A549 (cell line): ENCODE measurements at regions of chr10 and their contacts with region 1.

Region 1: GRCh38 chr10:12710594-12711349 is 290.7 kb downstream of the CCDC3 start:
- DNase-seq: peak; percentile 70 to 84
- ATAC-seq: peak; percentile 57 to 67; a peak in 5 of 6 replicates
- H3K4me3 ChIP-seq: no peak overlapping the region
- H3K27ac ChIP-seq: peak overlapping the region; percentile 82 to 94
- H3K4me1 ChIP-seq: peaks cover 55% of the 10 kb centered on the region
- CTCF ChIP-seq: peak; percentile 92
- EP300 ChIP-seq: no peak; a peak in 1 of 5 replicates
- POLR2A ChIP-seq: no peak
- RAD21 ChIP-seq: peak; percentile 96

Region 2: GRCh38 chr10:12214763-12215218 is 496.0 kb before region 1 on chr10:
- CTCF ChIA-PET with region 1: interaction called, 17 read pairs
- POLR2A ChIA-PET with region 1: interaction called, 4 read pairs
- DNase-seq: peak; percentile 40 to 50
- ATAC-seq: peak in 1 of 2 experiments; percentile 47; a peak in 3 of 6 replicates
- H3K4me3 ChIP-seq: no peak overlapping the region
- H3K27ac ChIP-seq: peak overlapping the region in 1 of 2 experiments; percentile 39; a peak in 2 of 6 replicates
- H3K4me1 ChIP-seq: peaks cover 4% of the 10 kb centered on the region; the same call in 2 of the 3 replicates
- CTCF ChIP-seq: peak; percentile 83
- EP300 ChIP-seq: no peak
- POLR2A ChIP-seq: no peak
- RAD21 ChIP-seq: peak; percentile 56 to 65

Region 3: GRCh38 chr10:12400266-12400931 is 310.4 kb before region 1 on chr10:
- CTCF ChIA-PET with region 1: interaction called, 12 read pairs
- POLR2A ChIA-PET with region 1: interaction called, 3 read pairs
- DNase-seq: peak in 1 of 2 experiments; percentile 66
- ATAC-seq: peak; percentile 75 to 78; a peak in 5 of 6 replicates
- H3K4me3 ChIP-seq: no peak overlapping the region
- H3K27ac ChIP-seq: peak overlapping the region; percentile 45 to 78; a peak in 4 of 6 replicates
- H3K4me1 ChIP-seq: peaks cover 26% of the 10 kb centered on the region
- CTCF ChIP-seq: no peak
- EP300 ChIP-seq: peak in 1 of 2 experiments; percentile 46; a peak in 1 of 5 replicates
- POLR2A ChIP-seq: no peak
- RAD21 ChIP-seq: no peak

Region 4: DNA sequence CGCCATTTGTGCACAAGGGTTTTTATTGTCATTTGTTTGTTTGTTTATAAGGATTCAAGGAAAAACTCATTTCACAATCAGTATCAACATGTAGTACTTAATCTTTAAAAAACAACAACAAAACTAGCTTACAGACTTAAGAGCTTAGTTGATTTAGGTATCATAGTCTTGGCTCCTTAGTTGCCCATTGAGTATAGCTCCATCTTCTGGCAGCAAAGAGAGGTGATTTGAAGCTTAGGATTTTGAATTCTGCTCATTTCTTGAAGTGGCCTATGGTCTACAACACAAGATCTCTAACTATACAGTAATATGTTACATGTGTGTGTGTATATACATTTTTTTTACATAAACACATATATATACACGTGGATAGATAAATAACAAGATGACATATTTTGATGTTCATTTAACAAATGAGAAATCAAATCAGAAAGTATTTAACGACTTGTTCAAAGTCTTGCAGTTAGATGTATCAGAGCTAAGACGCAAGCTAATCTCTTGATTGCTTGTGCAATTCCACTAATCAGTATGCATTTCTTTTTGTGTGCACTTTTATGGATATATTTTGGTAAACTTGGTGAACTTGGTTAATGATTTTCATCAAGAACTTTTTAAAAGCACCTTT is 54.1 kb before region 1 on chr10:
- CTCF ChIA-PET with region 1: interaction called, 14 read pairs
- POLR2A ChIA-PET with region 1: no interaction called
- DNase-seq: peak; percentile 50 to 77
- ATAC-seq: peak; percentile 59 to 72; a peak in 4 of 6 replicates
- H3K4me3 ChIP-seq: no peak overlapping the region
- H3K27ac ChIP-seq: no peak overlapping the region
- H3K4me1 ChIP-seq: no peaks in the 10 kb centered on the region
- CTCF ChIP-seq: peak; percentile 69
- EP300 ChIP-seq: no peak
- POLR2A ChIP-seq: no peak
- RAD21 ChIP-seq: peak; percentile 80 to 82

Region 5: GRCh38 chr10:12733271-12733670 is 22.5 kb after region 1 on chr10:
- CTCF ChIA-PET with region 1: no interaction called
- POLR2A ChIA-PET with region 1: no interaction called
- DNase-seq: no peak
- ATAC-seq: no peak
- H3K4me3 ChIP-seq: no peak overlapping the region
- H3K27ac ChIP-seq: no peak overlapping the region
- H3K4me1 ChIP-seq: no peaks in the 10 kb centered on the region
- CTCF ChIP-seq: no peak
- EP300 ChIP-seq: no peak
- POLR2A ChIP-seq: no peak
- RAD21 ChIP-seq: no peak

Region 6: GRCh38 chr10:13056456-13057077 is 345.8 kb after region 1 on chr10:
- CTCF ChIA-PET with region 1: interaction called, 11 read pairs
- POLR2A ChIA-PET with region 1: no interaction called
- DNase-seq: peak; percentile 23 to 43
- ATAC-seq: peak; percentile 84 to 89; a peak in 5 of 6 replicates
- H3K4me3 ChIP-seq: no peak overlapping the region
- H3K27ac ChIP-seq: no peak overlapping the region
- H3K4me1 ChIP-seq: no peaks in the 10 kb centered on the region
- CTCF ChIP-seq: peak; percentile 61
- EP300 ChIP-seq: no peak
- POLR2A ChIP-seq: no peak
- RAD21 ChIP-seq: peak; percentile 67 to 71

Region 7: DNA sequence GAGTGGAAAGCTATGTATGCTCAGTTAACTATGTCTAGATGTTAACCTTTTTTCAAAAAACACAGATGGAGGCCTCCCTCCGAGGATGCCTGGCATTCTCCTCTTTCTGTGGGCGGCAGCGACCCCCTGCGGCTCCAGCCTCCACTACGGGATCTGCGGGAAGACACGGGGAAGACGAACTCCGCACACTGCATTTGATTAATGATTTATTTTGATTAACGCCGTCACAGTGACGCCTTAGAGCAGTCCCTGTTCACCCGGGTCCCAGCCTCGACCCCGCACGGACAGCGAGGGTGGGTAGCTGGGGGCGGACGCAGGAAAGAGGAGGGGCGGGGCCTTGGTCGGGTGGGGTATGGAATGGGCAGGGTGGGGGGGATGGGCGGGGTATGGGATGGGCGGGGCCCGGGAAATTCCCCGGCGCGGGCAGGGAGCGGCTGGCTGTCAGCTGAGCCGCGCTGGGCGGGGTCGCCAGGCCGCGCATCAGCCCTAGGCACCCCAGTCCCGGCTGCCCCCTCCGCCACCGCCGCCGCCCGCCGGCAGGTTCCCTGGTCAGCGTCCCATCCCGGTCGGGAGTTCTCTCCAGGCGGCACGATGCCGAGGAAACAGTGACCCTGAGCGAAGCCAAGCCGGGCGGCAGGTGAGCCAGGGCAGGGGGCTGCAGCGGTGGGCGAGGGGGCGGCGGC is 389.0 kb after region 1 on chr10 and contains the start of gene OPTN:
- CTCF ChIA-PET with region 1: interaction called, 20 read pairs
- POLR2A ChIA-PET with region 1: no interaction called
- DNase-seq: peak; percentile 83 to 87
- ATAC-seq: peak; percentile 84
- H3K4me3 ChIP-seq: peak within 1 kb of the TSS; percentile 97
- H3K27ac ChIP-seq: peak within 1 kb of the TSS; percentile 88 to 98
- H3K4me1 ChIP-seq: peaks cover 22% of the 10 kb centered on the region; the same call in 2 of the 3 replicates
- CTCF ChIP-seq: peak; percentile 72
- EP300 ChIP-seq: no peak
- POLR2A ChIP-seq: peak; percentile 30
- RAD21 ChIP-seq: peak; percentile 79 to 82
- polyA plus RNA-seq, gene OPTN: 24.3 and 33.2 TPM in 2 replicates